ENCODE measurements at regions of chr16 and their contacts with region 1.

Region 1: DNA sequence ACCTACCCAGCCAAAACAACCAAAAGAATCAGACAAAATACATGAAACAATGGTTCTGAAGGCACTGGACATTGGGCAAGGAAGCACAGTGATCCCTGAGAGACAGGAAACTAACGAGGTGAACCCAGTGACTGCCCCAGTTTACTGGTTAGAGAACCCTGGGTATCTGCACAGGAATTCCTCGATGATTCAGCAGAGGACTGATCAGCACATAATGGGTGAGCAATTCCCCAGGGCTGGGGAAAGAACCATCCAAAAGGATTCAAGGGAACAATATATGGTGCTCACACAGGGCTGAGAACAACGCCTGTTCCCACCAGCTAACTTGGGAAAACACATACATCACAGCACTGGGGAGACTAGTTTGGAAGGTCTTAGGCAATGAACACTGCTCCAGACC is 167.2 kb downstream of the PARN start:
- DNase-seq: no peak
- ATAC-seq: no peak

Region 2: GRCh38 chr16:14405611-14406537 is 56.9 kb before region 1 on chr16:
- intact Hi-C with region 1: loop called (anchors 10 kb)
- DNase-seq: no peak
- ATAC-seq: peak; percentile 10

Region 3: DNA sequence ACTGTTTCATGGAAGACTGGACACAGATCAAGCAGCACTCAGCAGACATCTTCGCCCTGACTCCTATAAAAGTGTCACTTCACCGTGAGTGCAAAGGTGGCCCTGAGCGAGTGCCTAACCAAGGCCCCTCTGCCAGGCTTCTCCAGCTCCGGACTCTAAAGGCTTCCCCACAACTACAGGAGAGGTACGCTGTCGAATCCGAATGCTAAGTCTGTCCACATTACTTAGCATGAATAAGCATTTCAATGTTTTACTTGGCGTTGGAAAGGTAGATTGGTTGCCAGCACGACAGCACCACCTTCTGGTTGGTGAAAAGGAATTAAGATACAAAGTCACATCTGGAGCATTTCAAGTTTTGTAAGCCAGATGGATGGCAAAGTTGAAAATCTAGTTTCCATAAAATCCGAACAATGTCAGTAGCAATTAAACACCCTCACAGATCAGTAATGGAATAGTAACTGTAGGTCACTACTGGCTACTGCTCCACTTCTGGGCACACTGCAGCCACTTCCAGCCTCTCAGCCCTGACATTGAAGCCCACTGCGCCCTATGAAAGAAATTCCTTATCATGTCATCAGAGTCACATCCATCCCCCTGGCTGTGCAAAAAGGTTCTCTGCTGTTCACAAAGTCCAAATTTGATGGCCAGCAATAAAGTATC is 66.3 kb after region 1 on chr16:
- intact Hi-C with region 1: no loop called
- DNase-seq: peak; percentile 54
- ATAC-seq: peak; percentile 88

Measured in Right ventricle myocardium superior (tissue), 1 donor.